ENCODE measurements at regions of chr7 and their contacts with region 1.

Region 1: DNA sequence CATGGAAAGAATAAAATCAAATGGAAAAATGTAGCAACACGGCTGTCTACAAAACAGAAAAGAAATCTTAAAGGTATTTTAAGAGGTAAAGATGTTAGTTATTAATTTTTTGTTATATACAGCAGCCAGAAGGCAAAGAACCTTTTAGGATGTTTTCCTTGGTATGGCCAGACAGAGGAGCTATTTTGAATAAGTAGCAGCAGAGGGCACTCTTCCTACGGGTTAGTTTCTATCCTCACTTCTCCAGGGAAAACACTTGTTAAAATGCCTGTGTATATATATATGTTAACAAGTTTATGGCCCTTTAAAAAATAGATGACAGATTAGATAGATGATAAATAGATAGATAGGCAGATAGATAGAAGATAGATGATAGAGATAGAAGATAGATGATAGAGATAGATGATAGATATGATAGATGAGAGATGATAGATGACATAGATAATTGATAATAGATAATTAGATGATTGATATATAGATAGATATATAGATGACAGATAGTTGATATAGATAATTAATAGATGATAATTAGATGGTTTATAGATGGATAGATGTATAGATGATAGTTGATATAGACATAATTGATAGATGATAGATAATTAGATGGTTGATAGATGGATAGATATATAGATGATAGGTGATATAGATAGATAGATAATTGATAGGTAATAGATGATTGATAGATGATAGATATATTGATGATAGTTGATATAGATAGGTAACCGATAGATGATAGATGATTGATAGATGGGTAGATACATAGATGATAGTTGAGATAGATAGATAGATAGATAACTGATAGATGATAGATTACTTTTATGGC is 57.8 kb upstream of the WIPF3 start:
- DNase-seq: peak in 1 of 2 experiments; percentile 82
- H3K4me3 ChIP-seq: no peak overlapping the region
- H3K4me1 ChIP-seq: no peaks in the 10 kb centered on the region
- H3K27me3 ChIP-seq: no peaks in the 10 kb centered on the region

Region 2: GRCh38 chr7:29527505-29528108 is 220.9 kb before region 1 on chr7:
- in situ Hi-C with region 1: no loop called
- DNase-seq: no peak
- H3K4me3 ChIP-seq: no peak overlapping the region
- H3K4me1 ChIP-seq: no peaks in the 10 kb centered on the region
- H3K27me3 ChIP-seq: no peaks in the 10 kb centered on the region

Region 3: GRCh38 chr7:29915481-29916215 is 167.2 kb after region 1 on chr7:
- in situ Hi-C with region 1: loop called (anchors 5 kb)
- DNase-seq: no peak
- H3K4me3 ChIP-seq: no peak overlapping the region
- H3K4me1 ChIP-seq: no peaks in the 10 kb centered on the region
- H3K27me3 ChIP-seq: no peaks in the 10 kb centered on the region

Measured in HAP-1 (cell line).